Heart right ventricle (tissue), 16 donors: ENCODE measurements at regions of chr2 and their contacts with region 1.

Region 1: GRCh38 chr2:220949466-220949865 is 622.6 kb downstream of the EPHA4 start:
- DNase-seq: no peak
- ATAC-seq: no peak
- H3K4me3 ChIP-seq: no peak overlapping the region
- H3K27ac ChIP-seq: no peak overlapping the region
- H3K4me1 ChIP-seq: no peaks in the 10 kb centered on the region
- H3K27me3 ChIP-seq: no peaks in the 10 kb centered on the region
- CTCF ChIP-seq: no peak

Region 2: GRCh38 chr2:220687231-220687843 is 262.1 kb before region 1 on chr2:
- intact Hi-C with region 1: no loop called
- DNase-seq: peak; percentile 50 to 74
- ATAC-seq: peak; percentile 78 to 91 (median 87)
- H3K4me3 ChIP-seq: no peak overlapping the region
- H3K27ac ChIP-seq: no peak overlapping the region
- H3K4me1 ChIP-seq: peaks cover 0 to 6% (median 0%) of the 10 kb centered on the region in 9 donors
- H3K27me3 ChIP-seq: no peaks in the 10 kb centered on the region
- CTCF ChIP-seq: peak; percentile 79 to 93 (median 90)

Region 3: GRCh38 chr2:221104361-221104811 is 154.9 kb after region 1 on chr2:
- intact Hi-C with region 1: loop called in 1 of 10 experiments (anchors 10 kb)
- DNase-seq: peak; percentile 84 to 85
- ATAC-seq: peak; percentile 93 to 99 (median 98)
- H3K4me3 ChIP-seq: peak overlapping the region in 7 of 10 donors; percentile 8 to 36 (median 13)
- H3K27ac ChIP-seq: peak overlapping the region in 9 of 10 donors; percentile 30 to 80 (median 71)
- H3K4me1 ChIP-seq: peaks cover 10 to 31% (median 21%) of the 10 kb centered on the region in 9 donors
- H3K27me3 ChIP-seq: peaks cover 0 to 2% (median 0%) of the 10 kb centered on the region in 7 donors
- CTCF ChIP-seq: peak in 7 of 9 donors; percentile 11 to 49 (median 34)